ENCODE measurements at regions of chr1 and their contacts with region 1.

Region 1: GRCh38 chr1:180502360-180503273 is at the start of gene ACBD6:
- DNase-seq: peak; percentile 73 to 92 (median 84)
- ATAC-seq: peak; percentile 89
- H3K4me3 ChIP-seq: peak within 1 kb of the TSS; percentile 96 to 97
- H3K4me3 Mint-ChIP-seq: peak within 1 kb of the TSS; percentile 96
- H3K27ac ChIP-seq: peak within 1 kb of the TSS; percentile 75 to 76
- H3K27ac Mint-ChIP-seq: peak within 1 kb of the TSS; percentile 98
- H3K4me1 ChIP-seq: peaks cover 27% of the 10 kb centered on the region
- H3K4me1 Mint-ChIP-seq: peaks cover 47% of the 10 kb centered on the region
- H3K27me3 ChIP-seq: no peaks in the 10 kb centered on the region
- H3K27me3 Mint-ChIP-seq: no peaks in the 10 kb centered on the region
- CTCF ChIP-seq: no peak
- total RNA-seq, gene ACBD6: 23.4 to 24.6 TPM

Region 2: DNA sequence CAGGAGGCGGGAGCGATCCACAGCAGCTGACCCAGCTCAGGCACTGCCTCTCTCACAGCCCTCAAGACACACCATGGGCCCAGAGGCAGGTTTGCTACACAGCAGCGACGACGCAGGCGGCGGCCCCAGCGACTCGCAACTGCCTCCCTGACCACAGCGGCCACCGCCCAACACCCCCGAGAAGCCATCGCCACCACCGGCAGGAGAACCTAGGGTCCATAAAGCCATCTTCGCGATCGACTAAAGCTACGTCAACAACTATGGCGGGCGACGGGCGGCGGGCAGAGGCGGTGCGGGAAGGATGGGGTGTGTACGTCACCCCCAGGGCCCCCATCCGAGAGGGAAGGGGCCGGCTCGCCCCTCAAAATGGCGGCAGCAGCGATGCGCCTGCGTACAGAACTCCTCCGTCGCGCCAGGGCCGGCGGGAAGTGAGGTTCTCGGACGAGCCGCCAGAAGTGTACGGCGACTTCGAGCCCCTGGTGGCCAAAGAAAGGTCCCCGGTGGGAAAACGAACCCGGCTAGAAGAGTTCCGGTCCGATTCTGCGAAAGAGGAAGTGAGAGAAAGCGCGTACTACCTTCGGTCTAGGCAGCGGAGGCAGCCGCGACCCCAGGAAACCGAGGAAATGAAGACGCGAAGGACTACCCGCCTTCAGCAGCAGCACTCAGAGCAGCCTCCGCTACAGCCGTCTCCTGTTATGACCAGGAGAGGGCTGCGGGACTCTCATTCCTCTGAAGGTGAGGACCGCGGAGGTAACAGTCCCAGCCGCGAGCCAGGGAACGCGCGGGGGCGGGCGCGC is 620.2 kb before region 1 on chr1 and contains the start of gene TOR1AIP1:
- CTCF ChIA-PET with region 1: no interaction called
- POLR2A ChIA-PET with region 1: interaction called, 5 read pairs
- intact Hi-C with region 1: loop called (anchors 1 to 5 kb)
- DNase-seq: peak; percentile 95 to 99 (median 97)
- ATAC-seq: peak; percentile 74
- H3K4me3 ChIP-seq: peak within 1 kb of the TSS; percentile 91 to 95
- H3K4me3 Mint-ChIP-seq: peak within 1 kb of the TSS; percentile 94
- H3K27ac ChIP-seq: peak within 1 kb of the TSS; percentile 98 to 99
- H3K27ac Mint-ChIP-seq: peak within 1 kb of the TSS; percentile 100
- H3K4me1 ChIP-seq: peaks cover 37% of the 10 kb centered on the region
- H3K4me1 Mint-ChIP-seq: peaks cover 59% of the 10 kb centered on the region
- H3K27me3 ChIP-seq: no peaks in the 10 kb centered on the region
- H3K27me3 Mint-ChIP-seq: no peaks in the 10 kb centered on the region
- CTCF ChIP-seq: peak; percentile 41
- total RNA-seq, gene TOR1AIP1: 108 to 110 TPM

Measured in CD8-positive, alpha-beta T cell (primary cell).